AG04449 (cell line): ENCODE measurements at regions of chr6 and their contacts with region 1.

Region 1: GRCh38 chr6:29752451-29753308 is 29.4 kb downstream of the HLA-F start:
- DNase-seq: peak; percentile 40
- H3K4me3 ChIP-seq: peak overlapping the region; percentile 73
- CTCF ChIP-seq: peak; percentile 100

Region 2: DNA sequence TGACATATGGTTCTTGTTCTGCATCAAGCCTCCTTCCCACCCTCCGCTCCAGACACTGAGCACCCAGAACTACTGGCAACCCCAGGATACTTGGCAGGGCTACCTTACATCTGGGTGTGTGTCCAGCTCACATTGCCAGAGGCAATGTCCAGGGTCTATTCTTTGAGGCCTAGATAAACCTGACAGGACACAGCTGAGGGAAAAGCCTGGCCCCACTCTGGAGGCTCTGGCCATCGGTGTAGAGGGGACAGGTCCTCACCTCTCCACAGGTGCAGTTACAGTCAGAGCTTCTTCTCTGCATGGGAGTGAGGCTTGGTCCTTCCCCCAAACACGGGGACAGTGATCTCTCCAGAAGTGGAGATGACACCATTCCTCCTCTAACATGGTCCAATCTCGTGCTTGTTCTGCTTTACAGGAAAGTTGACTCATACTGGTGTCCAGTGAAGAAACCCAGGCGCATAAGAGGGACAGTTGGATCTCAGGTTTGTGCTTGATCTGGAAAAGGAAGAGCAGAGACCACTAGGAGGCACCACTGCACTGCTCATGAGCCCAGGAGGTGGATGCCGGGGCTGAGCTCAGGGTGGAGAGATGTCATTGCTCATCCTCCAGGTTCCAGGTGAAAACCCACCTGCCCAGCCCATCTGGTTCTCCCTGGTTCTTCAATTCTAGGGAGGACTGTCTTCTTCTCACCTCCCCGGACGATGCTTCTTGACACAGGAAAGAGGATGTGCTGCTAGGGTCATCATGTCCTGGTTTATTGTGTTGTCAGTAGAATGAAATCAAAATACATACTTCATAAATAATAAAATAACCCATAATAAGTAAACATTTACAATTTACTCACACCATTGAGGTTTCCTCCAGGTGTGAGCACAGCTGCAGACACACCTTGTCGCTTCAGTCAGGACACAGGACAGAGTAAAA is 14.7 kb before region 1 on chr6:
- CTCF ChIA-PET with region 1: interaction called, 77 read pairs
- POLR2A ChIA-PET with region 1: no interaction called
- DNase-seq: no peak
- H3K4me3 ChIP-seq: no peak overlapping the region
- CTCF ChIP-seq: peak; percentile 78

Region 3: GRCh38 chr6:29763491-29764289 is 11.0 kb after region 1 on chr6:
- CTCF ChIA-PET with region 1: interaction called, 53 read pairs
- POLR2A ChIA-PET with region 1: no interaction called
- DNase-seq: peak; percentile 31
- H3K4me3 ChIP-seq: no peak overlapping the region
- CTCF ChIP-seq: no peak

Region 4: GRCh38 chr6:30238174-30238795 is 485.6 kb after region 1 on chr6:
- CTCF ChIA-PET with region 1: no interaction called
- POLR2A ChIA-PET with region 1: no interaction called
- DNase-seq: no peak
- H3K4me3 ChIP-seq: no peak overlapping the region
- CTCF ChIP-seq: peak; percentile 33